Activated T-helper 1 cell treated with anti-CD3 and anti-CD28 coated beads, Interleukin-12 subunit alpha, Interleukin-12 subunit beta, Interleukin-2, Interleukin-4 antibody, amounts not matched to agents 30 ng/mL and 10 ng/mL and 1 ng/mL, durations not matched to agents 14 hours and 24 hours and 36 hours (primary cell): ENCODE measurements at regions of chr12 and their contacts with region 1.

Region 1: DNA sequence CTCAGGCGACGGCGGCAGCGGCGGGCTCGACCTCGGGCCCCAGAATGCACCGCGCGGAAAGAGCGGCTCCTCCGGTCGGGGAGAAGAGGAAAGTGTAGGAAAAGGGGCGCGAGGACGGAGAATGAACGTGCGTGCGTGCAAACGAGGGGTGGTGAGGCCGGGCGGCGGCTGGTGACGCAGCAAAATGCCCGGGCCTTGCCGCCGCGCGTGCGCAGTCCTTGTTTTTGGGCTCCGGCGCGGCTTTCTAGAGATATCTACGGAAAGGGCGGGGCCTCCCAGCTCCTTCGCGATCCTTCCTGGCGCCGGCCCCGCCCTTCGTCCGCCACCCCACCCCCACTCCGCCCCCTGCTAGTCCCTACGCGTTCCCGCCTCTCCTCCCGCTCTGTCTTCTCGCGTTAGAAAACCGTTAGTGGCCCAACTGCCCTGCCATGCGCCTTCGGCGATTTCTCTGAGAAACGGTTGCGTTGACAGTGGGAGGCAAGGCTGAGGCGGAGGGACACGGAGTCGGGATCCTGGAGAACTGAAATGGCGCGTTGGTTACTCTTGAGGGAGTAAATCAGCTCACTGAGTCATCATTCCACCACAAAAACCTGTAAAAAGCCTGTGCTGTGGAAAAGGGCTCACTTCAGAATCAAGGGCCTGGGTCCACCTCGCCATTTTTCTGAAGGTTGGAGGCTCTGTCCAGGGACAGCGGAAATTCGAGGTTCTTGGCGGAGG is at the start of gene PTGES3:
- DNase-seq: peak; percentile 98
- H3K4me3 Mint-ChIP-seq: peak within 1 kb of the TSS; percentile 100
- H3K27ac Mint-ChIP-seq: peak within 1 kb of the TSS; percentile 100
- H3K4me1 Mint-ChIP-seq: peaks cover 23% of the 10 kb centered on the region
- H3K27me3 Mint-ChIP-seq: no peaks in the 10 kb centered on the region
- total RNA-seq, gene PTGES3: 301 and 302 TPM in 2 replicates

Region 2: DNA sequence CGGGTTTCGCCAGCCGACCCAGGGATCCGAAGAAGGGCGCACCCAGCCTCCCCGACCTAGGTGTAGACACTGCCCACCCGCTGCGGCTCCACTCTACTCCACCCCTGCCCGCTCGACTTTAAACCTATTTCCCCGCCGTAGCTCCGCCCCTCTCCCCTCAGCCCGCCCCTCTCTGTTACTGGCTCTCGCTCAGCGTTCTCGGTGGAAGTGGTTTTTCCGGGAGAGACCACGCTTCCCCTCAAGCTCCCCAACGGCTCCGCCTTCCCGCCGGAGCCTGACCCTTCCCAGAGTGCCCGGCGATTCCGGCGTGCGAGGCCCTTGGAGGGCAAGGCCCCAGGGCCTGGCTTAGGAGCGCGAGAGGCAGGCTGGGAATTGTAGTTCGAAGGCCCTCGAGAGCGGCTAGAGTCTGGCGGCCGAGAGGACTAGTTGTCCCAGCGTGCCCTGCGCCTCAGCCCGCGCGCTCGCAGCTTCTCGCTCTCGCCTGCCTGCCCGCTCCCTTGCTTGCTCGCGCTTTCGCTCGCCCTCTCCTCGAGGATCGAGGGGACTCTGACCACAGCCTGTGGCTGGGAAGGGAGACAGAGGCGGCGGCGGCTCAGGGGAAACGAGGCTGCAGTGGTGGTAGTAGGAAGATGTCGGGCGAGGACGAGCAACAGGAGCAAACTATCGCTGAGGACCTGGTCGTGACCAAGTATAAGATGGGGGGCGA is 584.0 kb before region 1 on chr12 and contains the start of gene PA2G4:
- intact Hi-C with region 1: loop called (anchors 1 kb)
- DNase-seq: peak; percentile 99
- H3K4me3 Mint-ChIP-seq: peak within 1 kb of the TSS; percentile 98
- H3K27ac Mint-ChIP-seq: peak within 1 kb of the TSS; percentile 89
- H3K4me1 Mint-ChIP-seq: peaks cover 49% of the 10 kb centered on the region
- H3K27me3 Mint-ChIP-seq: no peaks in the 10 kb centered on the region
- total RNA-seq, gene PA2G4: 404 and 419 TPM in 2 replicates

Region 3: DNA sequence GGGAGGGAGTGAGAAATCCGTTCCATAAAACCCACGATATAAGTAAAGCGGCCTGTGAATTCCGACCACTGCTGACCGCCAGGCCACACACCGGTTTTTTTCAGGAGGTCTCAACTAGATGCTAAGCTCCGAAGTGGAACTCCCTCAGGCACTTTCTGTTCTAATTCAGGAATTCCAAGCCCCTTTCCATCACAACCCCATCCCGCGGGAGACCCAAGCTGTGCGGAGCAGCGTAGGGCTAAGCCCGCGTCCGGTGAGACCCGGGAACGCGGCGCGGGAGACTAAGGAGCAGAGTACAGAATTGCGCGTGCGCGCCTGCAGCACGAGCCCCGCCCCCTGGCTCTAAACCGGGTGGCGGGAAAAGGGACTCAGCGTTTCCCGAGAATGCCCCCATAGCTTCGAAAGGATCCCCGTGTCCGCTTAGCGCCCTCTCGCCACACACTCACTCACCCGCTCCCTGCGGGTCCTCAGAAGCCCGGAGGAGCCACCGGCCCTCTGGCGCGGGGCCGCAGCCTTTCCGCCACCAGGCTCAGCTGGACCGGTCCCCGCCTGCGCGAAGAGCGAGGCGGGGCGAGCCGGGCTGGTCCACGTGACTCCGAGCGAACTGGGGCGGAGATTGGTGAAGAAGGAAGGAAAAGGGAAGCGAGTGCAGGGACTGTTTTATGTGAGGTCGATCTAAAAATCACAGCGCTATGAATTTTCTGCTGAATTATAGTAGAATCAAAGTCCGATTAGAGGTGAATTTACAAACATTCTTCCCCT is 239.2 kb before region 1 on chr12 and contains the start of gene TIMELESS:
- intact Hi-C with region 1: loop called (anchors 1 kb)
- DNase-seq: peak; percentile 87
- H3K4me3 Mint-ChIP-seq: peak within 1 kb of the TSS; percentile 92
- H3K27ac Mint-ChIP-seq: peak within 1 kb of the TSS; percentile 85
- H3K4me1 Mint-ChIP-seq: peaks cover 27% of the 10 kb centered on the region
- H3K27me3 Mint-ChIP-seq: no peaks in the 10 kb centered on the region
- total RNA-seq, gene TIMELESS: 44.9 and 45.8 TPM in 2 replicates

Region 4: DNA sequence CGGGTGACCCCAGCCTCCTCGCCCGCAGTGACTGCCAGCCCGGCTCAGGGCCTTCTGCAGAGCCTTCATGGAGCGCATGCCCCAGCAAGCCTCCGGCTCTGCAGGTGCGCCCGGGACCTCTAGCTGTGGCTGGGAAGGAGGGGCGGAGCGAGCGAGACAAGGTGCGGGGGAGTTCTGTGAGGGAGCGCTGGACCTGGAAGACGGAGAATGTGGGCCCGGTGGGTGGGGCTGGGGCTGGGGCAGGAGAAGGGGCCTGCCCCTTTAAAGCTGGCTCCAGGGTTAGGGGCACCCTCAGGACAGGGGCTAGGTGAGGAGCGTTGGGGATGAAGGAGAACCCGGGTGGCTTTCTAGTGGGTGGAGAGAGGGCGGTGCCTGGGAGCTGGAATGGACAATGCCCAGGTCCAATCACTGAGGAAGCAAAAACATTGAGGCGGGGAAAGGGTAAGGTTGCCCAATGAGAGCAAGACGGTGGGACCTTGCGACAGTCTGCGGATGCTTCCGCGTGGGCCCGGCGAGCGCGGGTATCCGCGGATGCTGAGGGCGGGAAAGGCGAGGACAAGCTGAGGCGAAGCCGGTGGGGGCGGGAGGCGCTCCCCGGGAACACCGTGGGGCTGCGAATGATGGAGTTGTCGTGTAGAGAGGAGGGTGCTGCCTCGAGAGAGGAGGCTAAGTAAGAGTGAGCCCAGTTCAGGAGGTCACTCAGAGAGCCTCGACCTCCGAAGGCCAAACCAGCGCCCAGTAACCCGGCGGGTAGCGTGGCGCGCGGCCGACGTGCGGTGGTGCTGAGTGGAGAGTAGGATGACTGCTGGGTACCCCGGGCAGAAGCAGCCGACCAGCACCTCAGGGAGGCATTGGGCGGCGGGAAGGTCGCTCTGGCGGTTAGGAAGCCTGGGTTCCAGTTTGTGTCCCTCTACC is 200.0 kb before region 1 on chr12 and contains the start of gene GLS2:
- intact Hi-C with region 1: no loop called
- DNase-seq: peak; percentile 60
- H3K4me3 Mint-ChIP-seq: peak within 1 kb of the TSS; percentile 85
- H3K27ac Mint-ChIP-seq: no peak within 1 kb of the TSS
- H3K4me1 Mint-ChIP-seq: peaks cover 22% of the 10 kb centered on the region
- H3K27me3 Mint-ChIP-seq: peaks cover 48% of the 10 kb centered on the region
- total RNA-seq, gene GLS2: 1.5 and 2.6 TPM in 2 replicates

Region 5: DNA sequence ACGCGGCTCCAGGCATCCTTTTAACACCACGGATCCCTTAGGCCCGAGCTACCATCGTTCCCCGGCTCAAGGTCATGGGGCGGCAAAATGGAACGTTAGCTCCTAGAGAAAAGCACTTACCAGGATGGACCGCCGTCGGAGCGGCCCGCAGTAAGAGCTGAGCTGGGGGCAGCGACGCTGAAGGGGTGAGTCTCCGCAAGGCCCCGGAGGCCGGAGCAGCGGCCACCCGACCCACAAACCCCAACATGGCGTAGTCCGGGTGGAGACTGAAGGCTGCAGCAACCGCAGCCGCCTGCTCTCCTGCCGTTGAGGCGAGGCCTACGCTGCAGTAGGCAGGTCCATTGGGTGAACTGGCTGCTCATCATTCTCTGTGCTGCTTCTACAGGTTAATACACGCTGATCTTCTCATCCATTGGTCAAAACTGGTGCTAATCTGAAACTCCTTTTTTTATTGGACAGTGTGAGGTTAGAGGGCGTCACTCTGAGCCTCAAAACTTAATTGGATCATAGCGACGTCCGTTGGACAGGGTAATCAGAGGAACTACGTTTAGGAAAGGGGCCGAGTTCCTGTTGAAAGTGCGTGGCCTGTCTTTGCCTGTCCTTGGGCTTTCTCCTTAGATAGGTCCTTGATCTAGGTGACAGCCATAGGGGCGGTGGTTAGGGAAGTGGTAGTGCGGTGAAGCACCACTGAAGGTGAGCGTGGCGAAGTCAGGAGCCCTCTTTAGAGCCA is 42.4 kb before region 1 on chr12 and contains the start of gene ATP5F1B:
- intact Hi-C with region 1: loop called (anchors 1 kb)
- DNase-seq: peak; percentile 91
- H3K4me3 Mint-ChIP-seq: peak within 1 kb of the TSS; percentile 96
- H3K27ac Mint-ChIP-seq: peak within 1 kb of the TSS; percentile 95
- H3K4me1 Mint-ChIP-seq: peaks cover 37% of the 10 kb centered on the region
- H3K27me3 Mint-ChIP-seq: no peaks in the 10 kb centered on the region
- total RNA-seq, gene ATP5F1B: 714 and 716 TPM in 2 replicates

Region 6: GRCh38 chr12:56751712-56752598 is 63.7 kb after region 1 on chr12 and contains the start of gene PRIM1:
- intact Hi-C with region 1: loop called (anchors 1 kb)
- DNase-seq: peak; percentile 85
- H3K4me3 Mint-ChIP-seq: peak within 1 kb of the TSS; percentile 99
- H3K27ac Mint-ChIP-seq: peak within 1 kb of the TSS; percentile 99
- H3K4me1 Mint-ChIP-seq: peaks cover 45% of the 10 kb centered on the region
- H3K27me3 Mint-ChIP-seq: no peaks in the 10 kb centered on the region
- total RNA-seq, gene PRIM1: 67.5 and 67.8 TPM in 2 replicates

Region 7: DNA sequence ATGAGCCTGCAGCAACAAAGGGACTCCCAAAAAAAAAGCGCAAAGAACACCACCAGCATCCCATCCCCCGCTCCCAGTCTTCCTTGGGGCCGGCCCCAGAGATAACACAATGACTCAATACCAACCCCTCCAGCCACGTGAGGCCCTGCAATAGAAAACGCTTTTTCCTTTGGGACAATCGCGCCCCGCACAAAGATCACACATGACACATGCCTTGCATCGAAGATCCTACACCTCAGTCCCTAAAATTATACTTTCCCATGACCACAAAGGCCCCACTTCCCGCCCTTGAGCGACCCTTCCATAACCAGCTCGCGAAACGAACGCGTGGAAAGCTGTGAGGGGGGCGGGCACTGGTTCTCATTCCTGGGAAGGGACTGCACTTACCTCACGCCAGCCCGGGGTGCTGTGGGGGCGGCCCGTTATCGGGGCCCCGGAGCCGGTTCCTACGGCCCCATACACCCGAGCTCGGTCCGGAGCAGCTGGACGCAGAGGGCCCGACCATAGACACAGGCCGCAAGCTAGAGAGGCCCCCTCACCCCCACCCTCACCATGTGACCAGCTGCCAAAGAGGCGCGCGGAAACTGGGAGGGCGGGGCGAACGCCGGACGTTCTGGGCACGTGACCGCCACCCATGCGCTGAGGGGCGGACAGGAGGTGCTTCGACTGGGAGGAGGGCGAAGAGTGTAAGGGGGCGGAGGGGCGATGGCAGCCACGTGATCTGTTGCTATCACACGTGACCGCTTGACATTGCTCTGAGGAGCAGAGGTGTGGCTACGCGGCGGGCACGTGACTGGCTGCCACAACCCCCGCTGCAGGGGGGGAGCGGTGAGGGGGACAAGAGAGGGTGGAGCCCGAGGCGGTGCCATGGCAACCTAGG is 1063.7 kb after region 1 on chr12 and contains the start of gene CDK4:
- intact Hi-C with region 1: loop called (anchors 1 kb)
- DNase-seq: peak; percentile 98
- H3K4me3 Mint-ChIP-seq: peak within 1 kb of the TSS; percentile 94
- H3K27ac Mint-ChIP-seq: peak within 1 kb of the TSS; percentile 95
- H3K4me1 Mint-ChIP-seq: peaks cover 67% of the 10 kb centered on the region
- H3K27me3 Mint-ChIP-seq: peaks cover 3% of the 10 kb centered on the region
- total RNA-seq, gene CDK4: 218 and 227 TPM in 2 replicates